ENCODE measurements at regions of chr10 and their contacts with region 1.

Region 1: GRCh38 chr10:33330543-33331378 is 3.7 kb downstream of the NRP1 start:
- DNase-seq: peak in 1 of 2 donors; percentile 91
- H3K4me3 ChIP-seq: peak overlapping the region; percentile 71 to 93
- H3K27ac ChIP-seq: peak overlapping the region in 1 of 2 donors; percentile 22
- H3K4me1 ChIP-seq: peaks cover 0 to 33% of the 10 kb centered on the region in 2 donors
- H3K27me3 ChIP-seq: no peaks in the 10 kb centered on the region
- CTCF ChIP-seq: peak; percentile 70 to 91 (median 89)

Region 2: GRCh38 chr10:33125522-33126517 is 204.9 kb before region 1 on chr10:
- intact Hi-C with region 1: no loop called
- DNase-seq: no peak
- H3K4me3 ChIP-seq: no peak overlapping the region
- H3K27ac ChIP-seq: no peak overlapping the region
- H3K4me1 ChIP-seq: peaks cover 0 to 4% of the 10 kb centered on the region in 2 donors
- H3K27me3 ChIP-seq: no peaks in the 10 kb centered on the region
- CTCF ChIP-seq: no peak

Region 3: DNA sequence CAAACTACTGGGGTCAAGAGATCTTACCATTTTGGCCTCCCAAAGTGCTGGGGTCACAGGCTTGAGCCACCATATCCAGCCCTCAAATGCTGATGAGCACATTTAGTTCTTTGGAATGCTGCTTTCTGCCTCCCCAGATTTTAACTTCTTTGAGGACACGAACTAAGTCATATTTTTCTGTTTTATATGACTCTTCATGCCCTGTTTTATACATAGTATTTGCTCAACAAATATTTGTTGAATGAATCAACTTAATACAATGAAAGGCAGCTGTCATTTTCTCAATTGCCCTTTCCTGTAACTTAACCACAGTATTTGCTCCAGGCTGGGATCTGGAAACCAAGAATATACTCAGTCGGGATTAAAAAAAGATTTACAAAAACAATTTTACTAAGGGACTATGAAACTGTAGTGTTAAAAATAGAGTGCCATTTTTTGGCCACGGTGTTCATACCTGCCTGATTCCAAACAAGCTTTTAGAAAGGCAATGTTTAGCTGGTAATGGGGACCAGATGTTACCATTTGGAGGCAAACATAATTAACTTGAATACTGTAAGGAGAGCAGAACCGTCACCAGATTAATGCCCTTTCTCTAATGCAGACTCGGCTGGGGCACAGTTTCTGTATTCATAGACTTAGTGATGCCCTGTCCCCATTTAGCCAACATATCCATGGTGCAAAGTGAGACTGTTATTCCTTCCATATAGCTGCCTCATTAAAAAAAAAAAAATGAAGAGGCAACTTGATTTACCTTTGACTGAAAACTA is 113.9 kb before region 1 on chr10:
- intact Hi-C with region 1: loop called (anchors 1 kb)
- DNase-seq: no peak
- H3K4me3 ChIP-seq: no peak overlapping the region
- H3K27ac ChIP-seq: peak overlapping the region; percentile 62 to 66
- H3K4me1 ChIP-seq: peaks cover 4 to 16% of the 10 kb centered on the region in 2 donors
- H3K27me3 ChIP-seq: no peaks in the 10 kb centered on the region
- CTCF ChIP-seq: no peak

Region 4: GRCh38 chr10:33286157-33286934 is 44.4 kb before region 1 on chr10:
- intact Hi-C with region 1: loop called (anchors 5 kb)
- DNase-seq: peak in 1 of 2 donors; percentile 80
- H3K4me3 ChIP-seq: no peak overlapping the region
- H3K27ac ChIP-seq: peak overlapping the region; percentile 73 to 75
- H3K4me1 ChIP-seq: peaks cover 10 to 43% of the 10 kb centered on the region in 2 donors
- H3K27me3 ChIP-seq: no peaks in the 10 kb centered on the region
- CTCF ChIP-seq: no peak

Region 5: DNA sequence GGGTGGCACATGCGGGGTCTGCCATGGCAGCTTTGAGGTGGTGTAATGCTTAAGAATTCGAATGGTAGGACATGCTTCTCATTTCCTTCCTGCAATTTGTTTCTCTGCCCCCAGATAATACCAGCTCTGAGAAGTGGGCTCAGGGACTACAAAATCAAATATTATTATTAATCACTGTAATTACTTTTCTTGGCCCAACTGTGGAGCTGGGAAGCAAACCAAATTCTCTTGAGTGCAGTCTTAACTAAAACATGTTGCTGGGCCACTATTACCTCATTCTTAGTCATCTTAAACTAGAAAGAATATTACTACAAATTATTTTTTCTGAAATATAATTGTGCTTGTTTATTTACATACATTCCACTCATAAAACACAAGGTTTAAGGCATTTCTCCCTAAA is 570.4 kb after region 1 on chr10:
- intact Hi-C with region 1: loop called (anchors 10 kb)
- DNase-seq: no peak
- H3K4me3 ChIP-seq: no peak overlapping the region
- H3K27ac ChIP-seq: peak overlapping the region; percentile 5 to 44
- H3K4me1 ChIP-seq: peaks cover 3 to 8% of the 10 kb centered on the region in 2 donors
- H3K27me3 ChIP-seq: no peaks in the 10 kb centered on the region
- CTCF ChIP-seq: no peak

Region 6: GRCh38 chr10:34280599-34281374 is 950.0 kb after region 1 on chr10:
- intact Hi-C with region 1: loop called (anchors 5 kb)
- DNase-seq: peak in 1 of 2 donors; percentile 77
- H3K4me3 ChIP-seq: peak overlapping the region; percentile 10 to 22
- H3K27ac ChIP-seq: peak overlapping the region; percentile 57 to 74
- H3K4me1 ChIP-seq: peaks cover 0 to 27% of the 10 kb centered on the region in 2 donors
- H3K27me3 ChIP-seq: no peaks in the 10 kb centered on the region
- CTCF ChIP-seq: peak in 1 of 3 experiments; percentile 35

Region 7: DNA sequence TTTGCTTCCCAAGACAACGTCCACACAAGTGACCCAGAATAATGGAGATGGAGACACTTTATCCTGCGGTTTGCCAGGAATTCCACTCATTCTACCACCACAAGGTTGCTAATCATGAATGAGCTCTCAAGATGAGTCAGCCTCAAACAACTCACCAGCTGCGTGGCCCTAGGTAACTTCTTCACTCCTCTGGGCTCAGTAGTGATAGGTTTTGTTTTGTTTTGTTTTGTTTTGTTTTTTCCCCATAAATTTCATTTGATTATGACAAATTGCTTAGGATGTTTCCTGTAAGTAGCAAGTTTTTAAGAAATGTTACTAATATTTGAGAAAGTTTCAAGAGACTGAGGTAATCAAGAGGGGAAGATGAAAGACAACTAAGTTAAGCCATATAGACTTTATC is 1197.6 kb after region 1 on chr10:
- intact Hi-C with region 1: loop called (anchors 5 kb)
- DNase-seq: no peak
- H3K4me3 ChIP-seq: no peak overlapping the region
- H3K27ac ChIP-seq: no peak overlapping the region
- H3K4me1 ChIP-seq: peaks cover 10 to 21% of the 10 kb centered on the region in 2 donors
- H3K27me3 ChIP-seq: no peaks in the 10 kb centered on the region
- CTCF ChIP-seq: no peak

Measured in ascending aorta (tissue), 2 donors.